Heart right ventricle (tissue), 16 donors: ENCODE measurements at regions of chr12 and their contacts with region 1.

Region 1: DNA sequence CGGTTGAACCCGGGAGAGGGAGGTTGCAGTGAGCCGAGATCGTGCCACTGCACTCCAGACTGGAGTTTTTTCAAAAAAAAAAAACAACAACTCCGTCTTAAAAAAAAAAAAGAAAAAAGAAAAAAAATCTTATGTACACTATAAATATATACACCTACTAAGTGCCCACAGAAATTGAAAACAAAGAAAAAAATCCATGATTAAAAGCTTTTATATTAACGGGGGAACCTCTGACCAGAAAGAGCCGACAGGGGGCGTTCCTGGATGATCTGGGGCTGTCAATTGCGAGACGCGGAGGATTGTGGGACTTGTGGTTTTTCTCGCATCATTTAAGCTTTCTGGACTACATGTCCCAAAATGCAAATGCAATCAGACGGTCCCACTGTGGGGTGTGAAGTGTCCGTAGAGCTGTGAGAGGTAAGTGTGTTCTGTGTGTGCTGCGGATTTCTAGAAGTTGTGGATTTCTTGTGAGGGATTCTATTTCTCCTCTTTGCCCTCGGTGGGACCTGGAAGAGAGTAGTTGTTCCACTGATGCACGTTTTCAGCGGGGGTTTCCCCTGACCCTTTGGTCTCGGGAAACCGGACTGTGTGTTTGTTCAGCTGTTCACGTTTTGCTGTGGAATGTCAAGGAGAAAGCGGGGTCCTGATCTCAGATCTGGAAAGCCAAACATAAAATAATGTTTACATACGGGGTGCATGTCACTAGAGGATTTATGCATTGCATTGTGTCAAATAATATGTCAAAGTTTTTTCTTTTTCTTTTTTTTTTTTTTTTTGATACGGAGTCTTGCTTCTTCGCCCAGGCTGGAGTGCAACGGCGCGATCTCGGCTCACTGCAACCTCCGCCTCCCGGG is at the start of gene SIRT4:
- DNase-seq: peak; percentile 79 to 94
- ATAC-seq: peak; percentile 88 to 98 (median 98)
- H3K4me3 ChIP-seq: peak within 1 kb of the TSS; percentile 46 to 82 (median 64)
- H3K27ac ChIP-seq: peak within 1 kb of the TSS; percentile 27 to 90 (median 79)
- H3K4me1 ChIP-seq: peaks cover 0 to 8% (median 6%) of the 10 kb centered on the region in 9 donors
- H3K27me3 ChIP-seq: no peaks in the 10 kb centered on the region
- CTCF ChIP-seq: peak; percentile 72 to 94 (median 88)
- total RNA-seq, gene SIRT4: 3.7 to 9.0 (median 4.7) TPM

Region 2: GRCh38 chr12:120257041-120257821 is 45.0 kb before region 1 on chr12:
- intact Hi-C with region 1: no loop called
- DNase-seq: peak; percentile 72 to 78
- ATAC-seq: peak; percentile 78 to 86 (median 80)
- H3K4me3 ChIP-seq: peak overlapping the region in 2 of 10 donors; percentile 22 to 25
- H3K27ac ChIP-seq: peak overlapping the region; percentile 76 to 92 (median 86)
- H3K4me1 ChIP-seq: peaks cover 50 to 100% (median 98%) of the 10 kb centered on the region in 9 donors
- H3K27me3 ChIP-seq: no peaks in the 10 kb centered on the region
- CTCF ChIP-seq: peak in 3 of 9 donors; percentile 6 to 16 (median 8)

Region 3: GRCh38 chr12:120317224-120318105 is 15.3 kb after region 1 on chr12:
- intact Hi-C with region 1: loop called in 1 of 10 experiments (anchors 1 kb)
- DNase-seq: peak; percentile 99 to 100
- ATAC-seq: peak; percentile 99 to 100 (median 100)
- H3K4me3 ChIP-seq: peak overlapping the region; percentile 30 to 71 (median 64)
- H3K27ac ChIP-seq: peak overlapping the region; percentile 1 to 84 (median 82)
- H3K4me1 ChIP-seq: peaks cover 4 to 15% (median 8%) of the 10 kb centered on the region in 9 donors
- H3K27me3 ChIP-seq: no peaks in the 10 kb centered on the region
- CTCF ChIP-seq: peak; percentile 13 to 77 (median 51)